ENCODE measurements at regions of chr15 and their contacts with region 1.

Region 1: DNA sequence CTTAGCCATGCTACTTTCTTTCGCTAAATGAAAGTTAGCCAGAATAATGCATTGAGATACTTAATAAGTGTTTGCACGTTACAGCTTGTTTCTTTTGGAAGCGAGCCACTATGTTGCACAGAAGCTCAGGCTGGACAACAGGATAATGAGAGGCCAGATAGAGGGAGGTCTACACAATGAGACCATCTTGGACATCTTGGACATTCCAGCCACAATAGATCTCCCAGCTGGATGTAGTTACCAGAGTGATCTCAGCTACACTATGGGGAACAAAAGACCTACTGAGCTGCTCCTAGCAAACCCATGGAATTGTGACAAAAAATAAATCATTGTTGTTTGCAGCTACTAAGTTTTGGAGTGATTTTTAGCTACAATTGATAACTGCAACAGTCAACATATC is 540.1 kb upstream of the SEMA6D start:
- DNase-seq: no peak
- ATAC-seq: no peak
- H3K4me3 ChIP-seq: no peak overlapping the region
- H3K4me3 Mint-ChIP-seq: no peak overlapping the region
- H3K27ac ChIP-seq: no peak overlapping the region
- H3K27ac Mint-ChIP-seq: no peak overlapping the region
- H3K4me1 ChIP-seq: no peaks in the 10 kb centered on the region
- H3K4me1 Mint-ChIP-seq: no peaks in the 10 kb centered on the region
- H3K27me3 ChIP-seq: peaks cover 0 to 9% of the 10 kb centered on the region in 2 experiments
- H3K27me3 Mint-ChIP-seq: peaks cover 9% of the 10 kb centered on the region
- CTCF ChIP-seq: no peak

Region 2: GRCh38 chr15:47027322-47027946 is 149.7 kb before region 1 on chr15:
- CTCF ChIA-PET with region 1: no interaction called
- POLR2A ChIA-PET with region 1: no interaction called
- intact Hi-C with region 1: no loop called
- DNase-seq: no peak
- ATAC-seq: no peak
- H3K4me3 ChIP-seq: no peak overlapping the region
- H3K4me3 Mint-ChIP-seq: no peak overlapping the region
- H3K27ac ChIP-seq: no peak overlapping the region
- H3K27ac Mint-ChIP-seq: no peak overlapping the region
- H3K4me1 ChIP-seq: no peaks in the 10 kb centered on the region
- H3K4me1 Mint-ChIP-seq: no peaks in the 10 kb centered on the region
- H3K27me3 ChIP-seq: no peaks in the 10 kb centered on the region
- H3K27me3 Mint-ChIP-seq: no peaks in the 10 kb centered on the region
- CTCF ChIP-seq: no peak

Region 3: DNA sequence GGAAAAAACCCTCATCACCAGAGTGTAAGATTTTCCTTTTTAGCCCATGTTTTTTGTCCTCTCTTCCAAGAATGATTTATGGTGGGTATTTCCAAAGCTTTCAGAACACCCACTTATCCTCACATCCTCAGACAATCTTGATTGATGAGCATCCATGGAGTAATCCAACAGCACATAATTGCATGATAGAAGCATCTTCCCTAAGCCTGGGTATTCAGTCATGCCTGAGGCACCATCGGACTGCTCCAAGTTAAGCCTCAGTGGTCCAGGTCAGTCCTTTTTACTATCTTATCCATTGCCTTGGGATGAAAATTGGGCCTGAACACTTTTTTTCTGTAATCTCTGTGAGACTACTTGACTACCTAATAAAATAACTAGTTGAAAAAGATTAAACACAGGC is 135.9 kb before region 1 on chr15:
- CTCF ChIA-PET with region 1: no interaction called
- POLR2A ChIA-PET with region 1: no interaction called
- intact Hi-C with region 1: no loop called
- DNase-seq: no peak
- ATAC-seq: no peak
- H3K4me3 ChIP-seq: no peak overlapping the region
- H3K4me3 Mint-ChIP-seq: no peak overlapping the region
- H3K27ac ChIP-seq: no peak overlapping the region
- H3K27ac Mint-ChIP-seq: no peak overlapping the region
- H3K4me1 ChIP-seq: no peaks in the 10 kb centered on the region
- H3K4me1 Mint-ChIP-seq: no peaks in the 10 kb centered on the region
- H3K27me3 ChIP-seq: no peaks in the 10 kb centered on the region
- H3K27me3 Mint-ChIP-seq: no peaks in the 10 kb centered on the region
- CTCF ChIP-seq: no peak

Region 4: GRCh38 chr15:47244361-47244760 is 67.2 kb after region 1 on chr15:
- CTCF ChIA-PET with region 1: no interaction called
- POLR2A ChIA-PET with region 1: no interaction called
- intact Hi-C with region 1: loop called in 1 of 2 experiments (anchors 10 kb)
- DNase-seq: no peak
- ATAC-seq: no peak
- H3K4me3 ChIP-seq: no peak overlapping the region
- H3K4me3 Mint-ChIP-seq: no peak overlapping the region
- H3K27ac ChIP-seq: no peak overlapping the region
- H3K27ac Mint-ChIP-seq: no peak overlapping the region
- H3K4me1 ChIP-seq: no peaks in the 10 kb centered on the region
- H3K4me1 Mint-ChIP-seq: no peaks in the 10 kb centered on the region
- H3K27me3 ChIP-seq: no peaks in the 10 kb centered on the region
- H3K27me3 Mint-ChIP-seq: no peaks in the 10 kb centered on the region
- CTCF ChIP-seq: no peak

Region 5: GRCh38 chr15:47586653-47587224 is 409.6 kb after region 1 on chr15:
- CTCF ChIA-PET with region 1: no interaction called
- POLR2A ChIA-PET with region 1: no interaction called
- intact Hi-C with region 1: no loop called
- DNase-seq: no peak
- ATAC-seq: no peak
- H3K4me3 ChIP-seq: no peak overlapping the region
- H3K4me3 Mint-ChIP-seq: no peak overlapping the region
- H3K27ac ChIP-seq: no peak overlapping the region
- H3K27ac Mint-ChIP-seq: no peak overlapping the region
- H3K4me1 ChIP-seq: no peaks in the 10 kb centered on the region
- H3K4me1 Mint-ChIP-seq: no peaks in the 10 kb centered on the region
- H3K27me3 ChIP-seq: no peaks in the 10 kb centered on the region
- H3K27me3 Mint-ChIP-seq: no peaks in the 10 kb centered on the region
- CTCF ChIP-seq: no peak

Measured in CD4-positive, alpha-beta T cell (primary cell).